ENCODE measurements at regions of chr10 and their contacts with region 1.

Region 1: DNA sequence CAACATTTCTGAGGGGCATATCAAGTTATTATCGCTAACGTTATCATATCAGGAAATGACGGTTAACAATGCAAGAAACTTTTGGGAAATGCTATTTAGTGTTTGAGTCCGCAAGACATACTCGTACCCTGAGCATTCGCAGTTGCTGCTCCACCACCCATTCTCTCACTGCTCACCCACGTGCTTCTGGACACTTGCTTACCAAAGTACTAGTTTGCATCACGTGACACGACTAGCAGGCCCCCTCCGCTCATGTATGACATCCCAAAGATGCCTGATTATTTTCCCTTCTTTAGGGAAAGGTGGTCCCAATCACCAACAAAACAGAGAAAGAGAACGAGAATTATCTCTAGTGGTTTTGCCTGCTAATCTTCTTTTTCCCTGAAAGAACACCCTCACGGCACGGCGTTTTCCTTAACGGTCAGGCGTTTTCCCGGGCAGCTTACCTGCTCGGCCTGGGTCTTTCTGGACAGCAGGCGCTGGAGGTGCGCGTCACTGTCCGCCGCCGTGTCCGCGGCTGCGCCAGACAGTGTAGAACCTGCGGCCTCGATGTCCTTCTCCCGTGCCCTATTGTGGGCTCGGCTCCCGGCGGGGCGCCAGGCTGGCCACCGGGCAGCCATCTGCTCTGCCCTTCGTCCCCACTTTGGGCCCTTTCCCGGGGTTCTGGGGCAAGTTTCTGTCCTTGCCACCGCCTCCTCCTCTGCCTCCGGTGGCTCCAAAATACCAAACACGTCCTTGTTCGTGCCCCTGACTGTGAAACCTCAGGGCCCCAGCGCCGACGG is at the start of gene SUPV3L1:
- DNase-seq: peak; percentile 75 to 95 (median 81)
- ATAC-seq: peak; percentile 69
- H3K4me3 ChIP-seq: peak within 1 kb of the TSS; percentile 83
- H3K4me3 Mint-ChIP-seq: peak within 1 kb of the TSS; percentile 98
- H3K27ac ChIP-seq: peak within 1 kb of the TSS; percentile 94 to 95
- H3K27ac Mint-ChIP-seq: peak within 1 kb of the TSS; percentile 100
- H3K4me1 ChIP-seq: peaks cover 21% of the 10 kb centered on the region
- H3K4me1 Mint-ChIP-seq: peaks cover 50% of the 10 kb centered on the region
- H3K27me3 ChIP-seq: no peaks in the 10 kb centered on the region
- H3K27me3 Mint-ChIP-seq: no peaks in the 10 kb centered on the region
- CTCF ChIP-seq: no peak
- total RNA-seq, gene SUPV3L1: 78.1 to 78.7 TPM

Region 2: DNA sequence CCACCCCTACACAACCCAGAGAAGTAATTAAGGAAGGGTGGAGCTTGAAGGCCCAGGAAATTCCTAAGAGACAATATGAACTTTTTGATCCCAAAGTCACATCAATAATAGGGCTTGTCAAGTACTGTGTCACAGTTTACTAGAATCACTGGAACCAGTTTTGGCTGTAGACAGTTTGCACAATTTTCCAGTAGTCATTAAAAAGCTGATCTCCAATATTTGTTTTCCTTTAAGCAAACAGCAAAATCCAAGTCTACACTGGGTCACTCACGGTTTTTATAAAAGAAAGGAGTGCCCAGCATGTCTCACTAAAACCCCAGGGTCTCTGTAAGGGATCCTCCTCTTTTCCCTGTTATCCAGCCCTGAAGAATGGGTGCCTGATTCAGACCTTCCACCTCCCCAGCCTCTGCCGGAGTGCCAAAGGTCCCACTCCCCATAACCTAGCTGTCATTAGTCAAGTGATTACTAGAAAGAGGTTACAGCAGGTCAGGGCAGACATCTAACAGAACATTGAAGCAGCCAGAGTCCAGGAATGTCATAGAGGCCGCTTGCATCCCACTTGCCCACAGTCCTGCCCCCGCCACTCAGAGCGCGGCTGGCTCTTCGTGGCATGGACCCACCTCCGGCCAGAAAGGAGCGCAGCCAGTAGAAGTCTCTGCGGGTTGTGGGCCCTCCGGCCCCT is 653.2 kb before region 1 on chr10:
- CTCF ChIA-PET with region 1: no interaction called
- POLR2A ChIA-PET with region 1: no interaction called
- intact Hi-C with region 1: loop called in 1 of 2 experiments (anchors 5 kb)
- DNase-seq: no peak
- ATAC-seq: peak; percentile 10
- H3K4me3 ChIP-seq: peak overlapping the region; percentile 68
- H3K4me3 Mint-ChIP-seq: peak overlapping the region; percentile 88
- H3K27ac ChIP-seq: peak overlapping the region; percentile 82 to 90
- H3K27ac Mint-ChIP-seq: peak overlapping the region; percentile 96
- H3K4me1 ChIP-seq: peaks cover 16% of the 10 kb centered on the region
- H3K4me1 Mint-ChIP-seq: peaks cover 13% of the 10 kb centered on the region
- H3K27me3 ChIP-seq: no peaks in the 10 kb centered on the region
- H3K27me3 Mint-ChIP-seq: no peaks in the 10 kb centered on the region
- CTCF ChIP-seq: no peak

Region 3: GRCh38 chr10:68955832-68956532 is 224.0 kb before region 1 on chr10 and contains the start of gene DDX21:
- CTCF ChIA-PET with region 1: no interaction called
- POLR2A ChIA-PET with region 1: no interaction called
- intact Hi-C with region 1: loop called in 1 of 2 experiments (anchors 5 kb)
- DNase-seq: peak; percentile 73 to 95 (median 82)
- ATAC-seq: peak; percentile 80
- H3K4me3 ChIP-seq: peak within 1 kb of the TSS; percentile 97
- H3K4me3 Mint-ChIP-seq: peak within 1 kb of the TSS; percentile 95
- H3K27ac ChIP-seq: peak within 1 kb of the TSS; percentile 98 to 100
- H3K27ac Mint-ChIP-seq: peak within 1 kb of the TSS; percentile 94
- H3K4me1 ChIP-seq: peaks cover 45% of the 10 kb centered on the region
- H3K4me1 Mint-ChIP-seq: peaks cover 44% of the 10 kb centered on the region
- H3K27me3 ChIP-seq: no peaks in the 10 kb centered on the region
- H3K27me3 Mint-ChIP-seq: no peaks in the 10 kb centered on the region
- CTCF ChIP-seq: peak; percentile 87
- total RNA-seq, gene DDX21: 120 to 121 TPM

Region 4: DNA sequence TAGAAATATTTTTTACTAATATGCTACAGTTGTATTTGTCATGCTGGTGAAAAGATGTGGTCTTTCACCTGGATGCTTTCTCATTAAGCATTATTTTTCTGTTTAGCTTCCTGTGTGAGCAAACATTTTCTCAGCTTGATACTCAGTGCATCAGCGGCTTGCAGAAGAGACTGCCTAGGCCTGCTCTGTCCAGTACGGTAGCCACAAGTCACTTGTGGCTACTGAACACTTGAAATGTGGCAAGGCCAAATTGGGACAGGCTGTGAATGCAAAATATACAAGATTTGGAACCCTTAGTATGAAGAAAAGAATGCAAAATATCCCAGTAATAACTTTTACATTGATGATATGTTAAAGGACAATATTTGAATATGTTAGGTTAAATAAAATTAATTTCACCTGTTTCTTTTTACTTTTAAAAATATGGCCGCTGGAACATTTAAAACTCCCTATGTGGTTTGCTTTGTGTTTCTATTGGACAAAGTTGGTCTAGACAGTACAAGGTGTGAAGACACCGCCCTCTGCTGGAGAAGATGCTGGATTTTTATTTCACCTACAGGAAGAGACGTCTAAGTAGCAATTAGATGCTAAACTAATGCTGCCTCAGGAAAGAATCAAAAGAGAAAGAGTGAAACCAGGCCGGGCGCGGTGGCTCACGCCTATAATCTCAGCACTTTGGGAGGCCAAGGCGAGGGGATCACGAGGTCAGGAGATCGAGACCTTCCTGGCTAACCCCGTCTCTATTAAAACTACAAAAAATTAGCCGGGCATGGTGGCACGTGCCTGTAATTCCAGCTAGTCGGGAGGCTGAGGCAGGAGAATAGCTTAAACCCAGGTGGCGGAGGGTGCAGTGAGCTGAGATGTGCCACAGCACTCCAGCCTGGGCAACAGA is 86.7 kb before region 1 on chr10:
- CTCF ChIA-PET with region 1: no interaction called
- POLR2A ChIA-PET with region 1: interaction called, 5 read pairs
- intact Hi-C with region 1: loop called in 1 of 2 experiments (anchors 2 kb)
- DNase-seq: peak; percentile 54 to 96 (median 76)
- ATAC-seq: peak; percentile 33
- H3K4me3 ChIP-seq: no peak overlapping the region
- H3K4me3 Mint-ChIP-seq: peak overlapping the region; percentile 36
- H3K27ac ChIP-seq: peak overlapping the region; percentile 49 to 52
- H3K27ac Mint-ChIP-seq: peak overlapping the region; percentile 94
- H3K4me1 ChIP-seq: peaks cover 60% of the 10 kb centered on the region
- H3K4me1 Mint-ChIP-seq: peaks cover 53% of the 10 kb centered on the region
- H3K27me3 ChIP-seq: no peaks in the 10 kb centered on the region
- H3K27me3 Mint-ChIP-seq: no peaks in the 10 kb centered on the region
- CTCF ChIP-seq: peak; percentile 88

Region 5: DNA sequence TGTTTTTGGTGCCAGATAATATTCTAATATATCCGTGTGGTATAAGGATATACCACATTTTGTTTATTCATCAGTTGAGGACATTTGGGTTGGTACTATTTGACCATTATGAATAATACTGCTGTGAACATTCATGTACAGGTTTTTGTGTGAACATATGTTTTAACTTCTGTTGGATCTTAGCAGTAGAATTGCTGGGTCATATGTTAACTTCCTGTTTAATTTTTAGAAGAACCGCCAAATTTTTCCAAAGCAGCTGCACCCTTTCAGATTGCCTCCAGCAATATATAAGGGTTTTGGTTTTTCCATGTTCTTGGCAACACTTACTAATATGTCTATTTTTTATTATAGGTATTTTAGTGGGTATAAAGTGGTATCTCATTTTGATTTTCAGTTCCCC is 33.2 kb before region 1 on chr10:
- CTCF ChIA-PET with region 1: no interaction called
- POLR2A ChIA-PET with region 1: no interaction called
- intact Hi-C with region 1: no loop called
- DNase-seq: no peak
- ATAC-seq: no peak
- H3K4me3 ChIP-seq: no peak overlapping the region
- H3K4me3 Mint-ChIP-seq: no peak overlapping the region
- H3K27ac ChIP-seq: no peak overlapping the region
- H3K27ac Mint-ChIP-seq: no peak overlapping the region
- H3K4me1 ChIP-seq: no peaks in the 10 kb centered on the region
- H3K4me1 Mint-ChIP-seq: peaks cover 50% of the 10 kb centered on the region
- H3K27me3 ChIP-seq: no peaks in the 10 kb centered on the region
- H3K27me3 Mint-ChIP-seq: no peaks in the 10 kb centered on the region
- CTCF ChIP-seq: no peak

Region 6: GRCh38 chr10:69209787-69210484 is 30.0 kb after region 1 on chr10:
- CTCF ChIA-PET with region 1: no interaction called
- POLR2A ChIA-PET with region 1: no interaction called
- intact Hi-C with region 1: no loop called
- DNase-seq: no peak
- ATAC-seq: no peak
- H3K4me3 ChIP-seq: no peak overlapping the region
- H3K4me3 Mint-ChIP-seq: no peak overlapping the region
- H3K27ac ChIP-seq: no peak overlapping the region
- H3K27ac Mint-ChIP-seq: no peak overlapping the region
- H3K4me1 ChIP-seq: peaks cover 16% of the 10 kb centered on the region
- H3K4me1 Mint-ChIP-seq: peaks cover 17% of the 10 kb centered on the region
- H3K27me3 ChIP-seq: no peaks in the 10 kb centered on the region
- H3K27me3 Mint-ChIP-seq: no peaks in the 10 kb centered on the region
- CTCF ChIP-seq: no peak

Region 7: GRCh38 chr10:69222157-69223027 is 42.5 kb after region 1 on chr10:
- CTCF ChIA-PET with region 1: no interaction called
- POLR2A ChIA-PET with region 1: no interaction called
- intact Hi-C with region 1: loop called in 1 of 2 experiments (anchors 5 kb)
- DNase-seq: peak; percentile 24 to 88 (median 45)
- ATAC-seq: peak; percentile 85
- H3K4me3 ChIP-seq: peak overlapping the region; percentile 19
- H3K4me3 Mint-ChIP-seq: peak overlapping the region; percentile 55
- H3K27ac ChIP-seq: peak overlapping the region in 1 of 2 donors; percentile 25
- H3K27ac Mint-ChIP-seq: peak overlapping the region; percentile 67
- H3K4me1 ChIP-seq: peaks cover 45% of the 10 kb centered on the region
- H3K4me1 Mint-ChIP-seq: peaks cover 35% of the 10 kb centered on the region
- H3K27me3 ChIP-seq: no peaks in the 10 kb centered on the region
- H3K27me3 Mint-ChIP-seq: no peaks in the 10 kb centered on the region
- CTCF ChIP-seq: peak; percentile 87

Region 8: DNA sequence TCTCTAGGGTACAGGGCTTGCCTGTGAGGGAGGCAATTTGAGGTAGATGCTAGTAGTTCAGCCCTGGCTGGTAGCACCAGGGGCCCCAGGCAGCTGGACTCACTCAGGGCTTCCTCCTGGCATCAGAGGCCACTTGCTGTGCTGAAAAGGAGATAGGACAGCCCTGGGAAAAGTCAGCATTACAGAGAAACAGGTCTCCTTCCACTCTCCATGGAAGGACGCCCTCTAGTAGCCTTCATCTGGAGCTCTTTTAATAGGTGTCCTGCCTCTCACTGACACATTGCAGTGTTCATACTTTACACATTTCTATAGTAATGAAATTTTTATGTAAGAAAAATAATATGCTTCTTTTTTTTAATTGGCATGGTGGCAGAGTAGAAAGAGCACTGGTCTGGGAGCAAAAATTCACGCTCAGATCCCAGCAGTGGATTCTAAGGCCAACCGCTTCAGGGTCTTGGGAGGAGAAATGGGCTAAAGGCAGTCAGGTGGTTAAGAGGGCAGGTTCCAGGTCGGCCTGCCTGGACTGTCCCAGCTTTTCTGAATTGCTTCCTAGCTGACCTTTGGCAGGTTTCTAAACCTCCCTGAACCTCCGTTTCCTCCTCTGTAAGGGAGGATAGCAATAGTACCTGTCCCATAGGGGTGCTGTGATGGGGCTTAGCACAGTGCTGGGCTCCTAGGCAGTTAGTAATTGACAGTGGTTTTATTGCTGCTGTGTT is 916.9 kb after region 1 on chr10:
- CTCF ChIA-PET with region 1: no interaction called
- POLR2A ChIA-PET with region 1: no interaction called
- intact Hi-C with region 1: no loop called
- DNase-seq: no peak
- ATAC-seq: no peak
- H3K4me3 ChIP-seq: no peak overlapping the region
- H3K4me3 Mint-ChIP-seq: no peak overlapping the region
- H3K27ac ChIP-seq: no peak overlapping the region
- H3K27ac Mint-ChIP-seq: peak overlapping the region; percentile 69
- H3K4me1 ChIP-seq: peaks cover 30% of the 10 kb centered on the region
- H3K4me1 Mint-ChIP-seq: peaks cover 50% of the 10 kb centered on the region
- H3K27me3 ChIP-seq: no peaks in the 10 kb centered on the region
- H3K27me3 Mint-ChIP-seq: no peaks in the 10 kb centered on the region
- CTCF ChIP-seq: no peak